ENCODE measurements at regions of chr9 and their contacts with region 1.

Region 1: DNA sequence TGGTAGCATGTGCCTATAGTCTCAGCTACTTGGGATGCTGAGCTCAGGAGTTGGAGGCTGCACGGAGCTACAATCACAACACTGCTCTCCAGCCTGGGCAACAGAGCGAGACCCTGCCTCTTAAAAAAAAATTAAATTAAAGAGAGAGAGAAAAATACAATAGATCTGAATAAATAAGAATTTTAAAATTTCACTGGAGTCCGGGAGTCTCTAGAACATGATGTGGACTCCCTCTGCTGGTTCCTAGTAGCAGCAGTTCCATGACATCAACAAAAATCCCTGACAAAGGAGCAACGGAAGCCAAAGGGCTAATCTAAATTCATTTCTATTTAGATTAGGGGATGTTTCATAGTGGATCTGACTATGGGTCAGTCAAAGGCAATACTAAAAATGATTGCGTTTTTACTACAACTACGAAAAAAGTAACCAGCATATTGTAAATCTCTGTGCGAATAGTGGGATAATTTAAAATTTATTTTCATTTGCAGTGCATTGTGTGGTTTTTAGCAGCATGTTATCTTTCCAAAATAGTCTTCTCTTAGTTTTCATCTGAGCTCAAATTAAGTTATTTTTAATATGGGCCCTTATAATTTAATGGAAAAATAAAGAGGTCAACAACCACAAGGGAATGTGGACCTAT is 6.7 kb downstream of the INIP start:
- DNase-seq: peak; percentile 38
- H3K4me3 ChIP-seq: no peak overlapping the region; a peak in 1 of 4 replicates
- H3K27ac ChIP-seq: no peak overlapping the region
- H3K4me1 ChIP-seq: no peaks in the 10 kb centered on the region
- H3K27me3 ChIP-seq: no peaks in the 10 kb centered on the region
- CTCF ChIP-seq: peak; percentile 70
- EP300 ChIP-seq: no peak
- RAD21 ChIP-seq: peak; percentile 76

Region 2: DNA sequence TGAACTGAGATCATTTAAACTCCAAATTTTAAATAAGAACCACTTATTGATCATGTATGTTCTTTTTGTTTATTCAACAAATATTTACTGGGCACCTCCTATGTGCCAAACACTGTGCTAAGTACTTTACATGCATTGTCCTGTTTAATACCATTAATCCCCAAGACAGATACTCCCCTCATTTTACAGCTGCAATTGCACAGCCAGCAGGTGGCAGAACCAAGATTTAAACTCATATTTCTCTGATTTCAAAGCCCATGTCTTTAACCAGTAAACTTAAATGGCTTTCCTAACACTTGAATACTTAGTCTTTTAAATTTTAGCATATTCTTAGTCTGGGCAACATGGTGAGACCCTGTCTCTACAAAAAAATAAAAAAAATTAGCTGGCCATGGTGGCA is 268.0 kb before region 1 on chr9:
- CTCF ChIA-PET with region 1: interaction called, 12 read pairs
- POLR2A ChIA-PET with region 1: no interaction called
- DNase-seq: no peak
- H3K4me3 ChIP-seq: no peak overlapping the region
- H3K27ac ChIP-seq: no peak overlapping the region
- H3K4me1 ChIP-seq: peaks cover 0 to 5% of the 10 kb centered on the region in 2 experiments; a peak in 1 of 4 replicates
- H3K27me3 ChIP-seq: no peaks in the 10 kb centered on the region
- CTCF ChIP-seq: peak; percentile 63
- EP300 ChIP-seq: no peak
- RAD21 ChIP-seq: peak; percentile 51

Region 3: DNA sequence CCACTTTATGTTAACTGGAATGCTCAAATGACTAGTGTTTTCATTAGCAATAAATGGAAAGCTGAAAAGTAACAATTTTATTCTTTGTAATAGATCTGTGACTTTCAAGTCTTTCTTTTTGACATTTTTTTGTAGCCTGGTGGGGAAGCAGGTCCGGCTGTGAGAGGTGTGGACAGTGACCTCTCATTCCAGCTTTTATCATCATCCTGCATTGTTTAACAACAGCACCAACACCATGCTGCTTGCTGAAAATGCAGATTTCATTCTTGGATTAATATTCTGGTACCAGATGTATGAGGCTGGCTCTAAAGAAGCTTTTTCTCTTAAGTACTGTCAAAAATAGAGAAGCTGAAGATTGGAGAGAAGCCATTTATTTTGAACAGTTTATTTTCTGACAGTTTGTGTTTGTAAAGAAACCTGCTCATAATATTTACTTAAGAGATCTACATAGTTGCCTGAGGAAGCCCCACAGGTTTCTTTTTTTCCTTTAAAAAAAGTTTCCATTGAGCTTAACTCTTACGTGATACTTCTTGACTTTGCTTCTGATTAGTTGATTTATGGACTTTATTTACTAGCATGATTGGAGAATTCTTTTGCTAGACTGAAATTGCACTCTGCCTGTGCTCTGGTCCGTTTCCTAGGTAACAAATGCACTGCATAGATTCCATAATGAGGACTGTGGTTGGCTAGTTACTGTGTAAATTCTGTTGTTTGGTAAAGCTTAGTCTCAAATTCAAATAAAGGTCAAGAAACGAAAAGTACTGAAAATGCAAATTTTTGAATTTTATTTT is 221.1 kb before region 1 on chr9:
- CTCF ChIA-PET with region 1: interaction called, 10 read pairs
- POLR2A ChIA-PET with region 1: no interaction called
- DNase-seq: peak; percentile 28
- H3K4me3 ChIP-seq: no peak overlapping the region
- H3K27ac ChIP-seq: peak overlapping the region in 1 of 2 experiments; percentile 63; a peak in 2 of 4 replicates
- H3K4me1 ChIP-seq: peaks cover 14 to 27% of the 10 kb centered on the region in 2 experiments; a peak in 3 of 4 replicates
- H3K27me3 ChIP-seq: no peaks in the 10 kb centered on the region
- CTCF ChIP-seq: no peak
- EP300 ChIP-seq: no peak
- RAD21 ChIP-seq: no peak

Measured in SK-N-SH (cell line).